Calu3 (cell line): ENCODE measurements at regions of chr1 and their contacts with region 1.

Region 1: GRCh38 chr1:186849271-186849671 is 20.5 kb downstream of the PLA2G4A start:
- DNase-seq: peak; percentile 73
- H3K4me3 Mint-ChIP-seq: peak overlapping the region; percentile 37
- H3K27ac Mint-ChIP-seq: peak overlapping the region; percentile 88
- H3K4me1 Mint-ChIP-seq: peaks cover 39% of the 10 kb centered on the region
- H3K27me3 Mint-ChIP-seq: no peaks in the 10 kb centered on the region
- CTCF ChIP-seq: no peak

Region 2: GRCh38 chr1:186628910-186629309 is 220.4 kb before region 1 on chr1:
- CTCF ChIA-PET with region 1: no interaction called
- intact Hi-C with region 1: no loop called
- DNase-seq: no peak
- H3K4me3 Mint-ChIP-seq: no peak overlapping the region
- H3K27ac Mint-ChIP-seq: no peak overlapping the region
- H3K4me1 Mint-ChIP-seq: no peaks in the 10 kb centered on the region
- H3K27me3 Mint-ChIP-seq: no peaks in the 10 kb centered on the region
- CTCF ChIP-seq: no peak

Region 3: GRCh38 chr1:186828611-186829454 is 20.4 kb before region 1 on chr1 and contains the start of gene PLA2G4A:
- CTCF ChIA-PET with region 1: interaction called, 4 read pairs
- intact Hi-C with region 1: loop called (anchors 2 kb)
- DNase-seq: peak; percentile 63
- H3K4me3 Mint-ChIP-seq: peak within 1 kb of the TSS; percentile 97
- H3K27ac Mint-ChIP-seq: peak within 1 kb of the TSS; percentile 90
- H3K4me1 Mint-ChIP-seq: peaks cover 23% of the 10 kb centered on the region
- H3K27me3 Mint-ChIP-seq: no peaks in the 10 kb centered on the region
- CTCF ChIP-seq: no peak
- total RNA-seq, gene PLA2G4A: 29.8 and 36.0 TPM in 2 replicates

Region 4: DNA sequence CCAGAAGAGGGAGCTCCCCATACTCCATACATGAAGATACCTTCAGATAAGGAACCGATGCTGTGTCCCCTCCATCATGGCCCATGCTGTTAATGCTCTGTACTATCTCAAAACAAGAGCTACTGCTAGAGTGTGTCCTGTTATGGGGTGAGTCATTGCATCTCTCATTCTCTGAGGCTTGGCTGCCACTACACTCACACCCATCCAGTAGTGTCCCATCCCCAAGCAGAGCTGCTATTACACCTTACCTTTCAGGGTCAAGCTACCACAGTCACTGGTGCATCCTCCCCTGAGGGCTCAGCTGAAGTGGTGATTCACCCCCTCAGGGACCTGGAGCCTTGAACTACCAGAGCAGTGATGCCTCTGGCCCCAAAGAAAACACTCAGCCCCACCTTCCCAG is 178.0 kb after region 1 on chr1:
- CTCF ChIA-PET with region 1: no interaction called
- intact Hi-C with region 1: no loop called
- DNase-seq: no peak
- H3K4me3 Mint-ChIP-seq: no peak overlapping the region
- H3K27ac Mint-ChIP-seq: no peak overlapping the region
- H3K4me1 Mint-ChIP-seq: no peaks in the 10 kb centered on the region
- H3K27me3 Mint-ChIP-seq: no peaks in the 10 kb centered on the region
- CTCF ChIP-seq: no peak